ENCODE measurements at regions of chr13 and their contacts with region 1.

Region 1: DNA sequence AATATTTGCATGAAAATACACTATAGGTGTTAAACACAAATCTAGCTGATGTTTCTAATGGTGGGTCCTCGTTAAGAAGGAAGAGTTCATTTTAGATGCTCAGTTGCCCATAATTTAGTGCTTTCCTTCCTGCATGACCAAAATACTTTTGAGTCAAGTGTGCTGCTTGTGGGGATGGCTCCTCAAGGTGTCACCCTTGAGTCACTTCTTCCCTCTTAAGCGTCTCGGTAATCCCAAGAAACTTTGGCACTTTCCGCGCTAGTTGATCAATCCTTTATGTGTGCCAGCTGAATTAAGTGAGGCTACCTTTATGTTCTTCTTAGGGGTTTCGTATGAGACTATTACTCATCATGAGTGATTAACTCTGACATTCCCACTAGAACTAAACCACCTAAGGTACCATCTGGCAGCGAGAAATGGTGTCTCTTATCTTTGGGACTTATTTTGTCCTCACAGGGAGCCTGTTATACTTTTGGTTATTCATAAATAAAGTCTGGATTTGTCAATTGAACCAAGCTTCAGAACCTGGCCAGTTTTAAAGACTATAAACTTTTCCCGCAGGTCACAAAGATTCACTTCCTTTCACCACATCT is 106.8 kb downstream of the NHLRC3 start:
- DNase-seq: peak; percentile 59
- ATAC-seq: peak; percentile 42
- H3K4me3 Mint-ChIP-seq: no peak overlapping the region
- H3K27ac Mint-ChIP-seq: no peak overlapping the region
- H3K4me1 Mint-ChIP-seq: peaks cover 26% of the 10 kb centered on the region
- H3K27me3 Mint-ChIP-seq: peaks cover 34% of the 10 kb centered on the region

Region 2: GRCh38 chr13:39051157-39051556 is 93.9 kb before region 1 on chr13:
- CTCF ChIA-PET with region 1: no interaction called
- POLR2A ChIA-PET with region 1: no interaction called
- intact Hi-C with region 1: loop called in 1 of 2 experiments (anchors 5 kb)
- DNase-seq: no peak
- ATAC-seq: peak; percentile 47
- H3K4me3 Mint-ChIP-seq: no peak overlapping the region
- H3K27ac Mint-ChIP-seq: no peak overlapping the region
- H3K4me1 Mint-ChIP-seq: peaks cover 3% of the 10 kb centered on the region
- H3K27me3 Mint-ChIP-seq: no peaks in the 10 kb centered on the region

Region 3: DNA sequence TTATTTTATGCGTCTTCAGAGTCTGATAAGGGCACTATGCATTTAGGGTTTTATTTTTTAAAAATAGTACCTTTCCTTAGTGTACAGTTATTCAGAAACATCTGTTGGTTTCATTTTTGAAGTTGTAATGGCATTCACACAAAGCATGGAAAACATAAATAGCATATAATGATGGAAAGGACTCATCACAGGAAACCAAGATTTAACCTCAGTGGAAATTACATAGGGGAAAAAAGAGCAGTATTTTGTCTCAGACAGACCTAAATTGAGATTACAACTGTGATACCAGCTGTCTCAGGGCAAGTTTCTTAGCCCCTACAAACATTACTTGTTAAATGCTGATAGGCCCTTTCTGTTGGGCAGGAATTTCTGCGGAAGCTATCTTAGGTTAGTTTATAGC is 49.5 kb before region 1 on chr13:
- CTCF ChIA-PET with region 1: no interaction called
- POLR2A ChIA-PET with region 1: no interaction called
- intact Hi-C with region 1: loop called in 1 of 2 experiments (anchors 1 kb)
- DNase-seq: no peak
- ATAC-seq: peak; percentile 85
- H3K4me3 Mint-ChIP-seq: peak overlapping the region; percentile 15
- H3K27ac Mint-ChIP-seq: peak overlapping the region; percentile 75
- H3K4me1 Mint-ChIP-seq: peaks cover 31% of the 10 kb centered on the region
- H3K27me3 Mint-ChIP-seq: no peaks in the 10 kb centered on the region

Region 4: GRCh38 chr13:39132286-39133230 is 12.5 kb before region 1 on chr13:
- CTCF ChIA-PET with region 1: interaction called, 12 read pairs
- POLR2A ChIA-PET with region 1: no interaction called
- intact Hi-C with region 1: no loop called
- DNase-seq: no peak
- ATAC-seq: peak; percentile 78
- H3K4me3 Mint-ChIP-seq: no peak overlapping the region
- H3K27ac Mint-ChIP-seq: no peak overlapping the region
- H3K4me1 Mint-ChIP-seq: peaks cover 4% of the 10 kb centered on the region
- H3K27me3 Mint-ChIP-seq: peaks cover 22% of the 10 kb centered on the region

Region 5: GRCh38 chr13:39196958-39197646 is 52.1 kb after region 1 on chr13:
- CTCF ChIA-PET with region 1: no interaction called
- POLR2A ChIA-PET with region 1: no interaction called
- intact Hi-C with region 1: loop called (anchors 1 kb)
- DNase-seq: no peak
- ATAC-seq: peak; percentile 89
- H3K4me3 Mint-ChIP-seq: no peak overlapping the region
- H3K27ac Mint-ChIP-seq: peak overlapping the region; percentile 52
- H3K4me1 Mint-ChIP-seq: peaks cover 13% of the 10 kb centered on the region
- H3K27me3 Mint-ChIP-seq: peaks cover 13% of the 10 kb centered on the region

Region 6: GRCh38 chr13:39263033-39263432 is 118.0 kb after region 1 on chr13:
- CTCF ChIA-PET with region 1: interaction called, 7 read pairs
- POLR2A ChIA-PET with region 1: no interaction called
- intact Hi-C with region 1: loop called (anchors 1 kb)
- DNase-seq: peak; percentile 65
- ATAC-seq: peak; percentile 85
- H3K4me3 Mint-ChIP-seq: no peak overlapping the region
- H3K27ac Mint-ChIP-seq: no peak overlapping the region
- H3K4me1 Mint-ChIP-seq: peaks cover 7% of the 10 kb centered on the region
- H3K27me3 Mint-ChIP-seq: peaks cover 9% of the 10 kb centered on the region

Region 7: DNA sequence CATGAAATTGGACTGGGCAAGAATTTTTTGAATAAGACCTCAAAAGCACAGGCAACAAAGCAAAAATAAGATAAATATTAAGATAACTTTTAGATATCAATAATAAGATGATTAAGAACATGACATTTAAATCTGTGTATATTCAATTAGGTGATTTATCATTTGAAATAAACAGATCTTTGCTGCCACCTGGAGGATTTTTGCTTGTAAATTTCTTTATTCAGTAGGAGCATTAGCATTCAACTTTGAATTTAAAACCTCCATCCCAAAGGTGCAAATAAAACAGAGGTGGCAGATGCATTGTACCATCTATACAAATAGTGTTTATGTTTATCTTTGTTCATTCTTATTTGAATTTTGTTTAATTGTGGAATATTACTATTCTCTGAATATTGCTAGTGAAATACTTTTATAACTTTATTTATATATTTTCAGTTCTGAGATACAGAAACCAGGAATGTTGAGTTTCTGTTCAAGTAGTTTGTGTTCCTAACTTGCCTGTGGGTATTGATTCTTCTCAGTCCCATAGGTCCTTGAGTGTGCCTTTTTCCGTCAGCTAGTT is 531.4 kb after region 1 on chr13:
- CTCF ChIA-PET with region 1: no interaction called
- POLR2A ChIA-PET with region 1: no interaction called
- intact Hi-C with region 1: loop called in 1 of 2 experiments (anchors 10 kb)
- DNase-seq: peak; percentile 17
- ATAC-seq: no peak
- H3K4me3 Mint-ChIP-seq: no peak overlapping the region
- H3K27ac Mint-ChIP-seq: no peak overlapping the region
- H3K4me1 Mint-ChIP-seq: peaks cover 3% of the 10 kb centered on the region
- H3K27me3 Mint-ChIP-seq: no peaks in the 10 kb centered on the region